ENCODE measurements at regions of chr1 and their contacts with region 1.

Region 1: GRCh38 chr1:222288040-222288439 is 259.9 kb downstream of the HHIPL2 start:
- DNase-seq: peak; percentile 94
- ATAC-seq: peak; percentile 86
- H3K4me3 ChIP-seq: no peak overlapping the region
- H3K27ac ChIP-seq: peak overlapping the region; percentile 47
- H3K4me1 ChIP-seq: peaks cover 25% of the 10 kb centered on the region
- H3K27me3 ChIP-seq: no peaks in the 10 kb centered on the region
- CTCF ChIP-seq: peak; percentile 27; the same call in 1 of the 2 replicates

Region 2: GRCh38 chr1:222798116-222798515 is 510.1 kb after region 1 on chr1:
- CTCF ChIA-PET with region 1: interaction called, 12 read pairs
- POLR2A ChIA-PET with region 1: no interaction called
- intact Hi-C with region 1: no loop called
- DNase-seq: peak; percentile 95
- ATAC-seq: peak; percentile 90
- H3K4me3 ChIP-seq: no peak overlapping the region
- H3K27ac ChIP-seq: no peak overlapping the region
- H3K4me1 ChIP-seq: peaks cover 9% of the 10 kb centered on the region
- H3K27me3 ChIP-seq: no peaks in the 10 kb centered on the region
- CTCF ChIP-seq: no peak